Tibial artery (tissue), 4 donors: ENCODE measurements at regions of chr22 and their contacts with region 1.

Region 1: DNA sequence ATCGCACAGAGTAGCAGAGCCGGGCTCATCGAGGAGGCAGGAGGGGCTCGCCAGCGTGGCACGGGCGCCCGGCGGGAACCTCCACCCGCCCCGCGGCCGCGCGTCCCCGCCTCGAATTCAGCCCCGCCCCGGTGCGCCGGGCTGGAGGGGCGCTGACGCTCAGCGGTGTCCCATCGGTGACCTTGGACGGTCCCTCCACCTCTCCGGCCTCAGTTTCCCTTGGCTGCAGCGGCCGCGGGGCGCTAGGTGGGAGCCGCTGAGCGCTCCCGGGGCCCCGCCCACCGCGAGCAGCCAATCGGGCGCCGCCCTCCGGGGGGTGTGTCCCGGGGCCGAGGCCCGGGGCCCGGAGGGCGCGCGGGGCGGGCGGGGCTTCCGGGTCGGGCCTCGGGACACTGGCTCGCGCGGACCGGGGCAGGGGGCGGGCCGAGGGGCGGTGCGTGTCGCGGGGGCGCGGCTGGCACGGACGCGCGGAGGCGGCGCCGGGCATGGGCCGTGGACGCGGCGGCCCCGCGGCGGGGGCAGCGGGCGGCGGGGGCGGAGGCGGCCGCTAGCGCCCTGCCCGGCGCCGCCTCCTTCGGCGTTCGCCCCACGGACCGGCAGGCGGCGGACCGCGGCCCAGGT is at the start of gene PPARA:
- DNase-seq: peak; percentile 88 to 95
- H3K4me3 ChIP-seq: peak within 1 kb of the TSS; percentile 92 to 97
- H3K27ac ChIP-seq: peak within 1 kb of the TSS; percentile 98 to 99
- H3K4me1 ChIP-seq: peaks cover 0 to 37% (median 28%) of the 10 kb centered on the region in 4 donors
- H3K27me3 ChIP-seq: no peaks in the 10 kb centered on the region
- CTCF ChIP-seq: no peak

Region 2: GRCh38 chr22:45336971-45337431 is 813.1 kb before region 1 on chr22:
- intact Hi-C with region 1: no loop called
- DNase-seq: peak; percentile 83
- H3K4me3 ChIP-seq: peak overlapping the region; percentile 13 to 23
- H3K27ac ChIP-seq: peak overlapping the region; percentile 27 to 66
- H3K4me1 ChIP-seq: peaks cover 0 to 31% (median 12%) of the 10 kb centered on the region in 4 donors
- H3K27me3 ChIP-seq: no peaks in the 10 kb centered on the region
- CTCF ChIP-seq: no peak

Region 3: GRCh38 chr22:46250035-46250782 is 100.1 kb after region 1 on chr22 and contains the start of gene CDPF1:
- intact Hi-C with region 1: loop called (anchors 5 kb)
- DNase-seq: peak; percentile 87 to 94
- H3K4me3 ChIP-seq: peak within 1 kb of the TSS; percentile 70
- H3K27ac ChIP-seq: peak within 1 kb of the TSS; percentile 84 to 85
- H3K4me1 ChIP-seq: peaks cover 0 to 23% (median 15%) of the 10 kb centered on the region in 4 donors
- H3K27me3 ChIP-seq: no peaks in the 10 kb centered on the region
- CTCF ChIP-seq: no peak